ENCODE measurements at regions of chr2 and their contacts with region 1.

Region 1: GRCh38 chr2:230614913-230615332 is 97.7 kb upstream of the CAB39 start:
- DNase-seq: no peak
- ATAC-seq: no peak
- H3K4me3 ChIP-seq: no peak overlapping the region
- H3K27ac ChIP-seq: no peak overlapping the region
- H3K4me1 ChIP-seq: peaks cover 27 to 47% of the 10 kb centered on the region in 2 experiments
- H3K27me3 ChIP-seq: no peaks in the 10 kb centered on the region
- CTCF ChIP-seq: no peak
- POLR2A ChIP-seq: no peak
- RAD21 ChIP-seq: no peak

Region 2: DNA sequence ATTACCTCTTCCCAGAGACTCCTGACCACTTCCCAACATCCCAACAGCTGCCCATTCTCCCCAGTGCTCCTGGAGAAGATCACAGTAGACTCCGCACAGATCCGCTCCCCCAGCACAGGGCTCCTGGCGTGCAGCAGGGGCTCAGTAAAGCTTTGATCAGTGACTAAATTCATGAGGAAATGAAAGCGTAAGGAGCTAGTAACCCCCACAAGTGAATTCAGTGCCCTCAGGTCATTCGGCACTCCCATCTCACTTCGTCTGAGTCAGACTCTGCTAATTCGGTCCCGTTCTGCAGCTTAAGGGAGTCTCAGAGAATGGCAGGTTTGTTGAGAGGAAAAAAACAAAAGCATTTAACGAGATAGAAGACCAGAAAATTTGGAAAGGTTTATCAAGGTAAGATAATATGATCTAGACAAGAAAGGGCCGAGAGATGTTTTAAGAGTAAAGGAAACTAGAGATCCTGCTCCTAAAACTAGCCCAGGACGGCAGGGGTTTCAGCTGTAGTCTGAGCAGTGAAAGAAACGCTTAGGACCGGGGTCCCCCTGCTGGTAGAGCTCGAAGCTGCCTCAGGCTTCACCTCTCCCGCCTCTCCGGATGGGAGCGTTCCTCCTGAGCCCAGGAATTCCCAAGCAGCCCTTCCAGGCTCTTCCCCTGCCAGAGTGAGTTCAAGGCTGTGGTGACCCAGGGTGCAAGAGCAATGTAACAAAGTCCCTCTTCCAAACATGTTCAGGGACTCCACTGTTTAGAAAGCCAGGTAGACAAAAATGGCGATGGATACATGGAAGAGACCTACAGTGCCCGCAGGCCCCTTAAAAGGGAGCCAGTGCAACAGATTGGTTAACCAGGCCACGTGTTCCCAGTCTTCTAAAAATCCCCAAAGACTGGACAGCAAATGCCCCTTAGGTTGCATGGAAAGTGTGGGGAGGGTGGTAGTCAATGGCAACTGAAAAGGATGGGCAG is 1027.9 kb before region 1 on chr2:
- CTCF ChIA-PET with region 1: no interaction called
- POLR2A ChIA-PET with region 1: no interaction called
- RAD21 ChIA-PET with region 1: no interaction called
- intact Hi-C with region 1: loop called (anchors 5 kb)
- DNase-seq: peak; percentile 76
- ATAC-seq: peak; percentile 93
- H3K4me3 ChIP-seq: peak overlapping the region; percentile 38 to 53
- H3K27ac ChIP-seq: no peak overlapping the region
- H3K4me1 ChIP-seq: peaks cover 4 to 21% of the 10 kb centered on the region in 2 experiments; a peak in 3 of 4 replicates
- H3K27me3 ChIP-seq: no peaks in the 10 kb centered on the region
- CTCF ChIP-seq: peak; percentile 84 to 91 (median 84)
- POLR2A ChIP-seq: no peak
- RAD21 ChIP-seq: peak; percentile 96

Region 3: GRCh38 chr2:229921892-229922445 is 693.0 kb before region 1 on chr2 and contains the start of gene TRIP12:
- CTCF ChIA-PET with region 1: no interaction called
- POLR2A ChIA-PET with region 1: no interaction called
- RAD21 ChIA-PET with region 1: no interaction called
- intact Hi-C with region 1: loop called (anchors 5 kb)
- DNase-seq: peak; percentile 89
- ATAC-seq: peak; percentile 79
- H3K4me3 ChIP-seq: peak within 1 kb of the TSS; percentile 77 to 94
- H3K27ac ChIP-seq: peak within 1 kb of the TSS; percentile 77
- H3K4me1 ChIP-seq: peaks cover 14 to 17% of the 10 kb centered on the region in 2 experiments; a peak in 3 of 4 replicates
- H3K27me3 ChIP-seq: no peaks in the 10 kb centered on the region
- CTCF ChIP-seq: no peak
- POLR2A ChIP-seq: no peak
- RAD21 ChIP-seq: no peak
- total RNA-seq, gene TRIP12: 175 TPM

Region 4: GRCh38 chr2:230068016-230068650 is 546.8 kb before region 1 on chr2:
- CTCF ChIA-PET with region 1: interaction called, 7 read pairs
- POLR2A ChIA-PET with region 1: no interaction called
- RAD21 ChIA-PET with region 1: no interaction called
- intact Hi-C with region 1: loop called (anchors 2 kb)
- DNase-seq: no peak
- ATAC-seq: peak; percentile 64
- H3K4me3 ChIP-seq: peak overlapping the region; percentile 74 to 82
- H3K27ac ChIP-seq: peak overlapping the region; percentile 76
- H3K4me1 ChIP-seq: peaks cover 0 to 18% of the 10 kb centered on the region in 2 experiments; a peak in 3 of 4 replicates
- H3K27me3 ChIP-seq: no peaks in the 10 kb centered on the region
- CTCF ChIP-seq: peak in 1 of 3 experiments; percentile 23; a peak in 1 of 6 replicates
- POLR2A ChIP-seq: no peak
- RAD21 ChIP-seq: no peak

Region 5: DNA sequence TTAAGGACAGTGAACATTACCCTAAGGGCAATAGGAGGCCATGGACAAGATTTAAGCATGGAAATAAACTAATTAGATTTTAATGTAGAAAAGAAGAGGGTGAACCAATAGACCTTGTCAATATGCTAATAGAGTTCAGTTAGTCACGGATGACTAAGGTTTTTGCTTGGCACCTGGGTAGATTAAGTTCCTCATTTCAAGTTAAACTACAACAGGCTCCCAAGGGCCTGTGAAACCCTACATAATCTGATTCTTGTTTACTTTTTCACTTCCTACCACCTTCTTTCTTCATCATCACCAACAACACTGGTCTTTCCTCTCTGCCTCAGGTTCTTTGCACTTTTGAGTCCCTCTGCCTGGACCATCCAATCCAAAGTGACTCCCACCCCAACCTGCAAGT is 409.9 kb before region 1 on chr2:
- CTCF ChIA-PET with region 1: no interaction called
- POLR2A ChIA-PET with region 1: no interaction called
- RAD21 ChIA-PET with region 1: no interaction called
- intact Hi-C with region 1: no loop called
- DNase-seq: no peak
- ATAC-seq: no peak
- H3K4me3 ChIP-seq: no peak overlapping the region
- H3K27ac ChIP-seq: no peak overlapping the region
- H3K4me1 ChIP-seq: no peaks in the 10 kb centered on the region
- H3K27me3 ChIP-seq: no peaks in the 10 kb centered on the region
- CTCF ChIP-seq: no peak
- POLR2A ChIP-seq: no peak
- RAD21 ChIP-seq: no peak

Region 6: GRCh38 chr2:230323385-230324106 is 291.4 kb before region 1 on chr2:
- CTCF ChIA-PET with region 1: interaction called, 5 read pairs
- POLR2A ChIA-PET with region 1: no interaction called
- RAD21 ChIA-PET with region 1: no interaction called
- intact Hi-C with region 1: loop called (anchors 1 kb)
- DNase-seq: peak; percentile 22
- ATAC-seq: peak; percentile 82
- H3K4me3 ChIP-seq: no peak overlapping the region
- H3K27ac ChIP-seq: no peak overlapping the region; the same call in 1 of the 2 replicates
- H3K4me1 ChIP-seq: peaks cover 3 to 37% of the 10 kb centered on the region in 2 experiments; a peak in 3 of 4 replicates
- H3K27me3 ChIP-seq: no peaks in the 10 kb centered on the region
- CTCF ChIP-seq: peak; percentile 40 to 92 (median 80); a peak in 4 of 6 replicates
- POLR2A ChIP-seq: no peak
- RAD21 ChIP-seq: peak; percentile 53

Region 7: GRCh38 chr2:230636684-230637271 is 21.9 kb after region 1 on chr2:
- CTCF ChIA-PET with region 1: no interaction called
- POLR2A ChIA-PET with region 1: no interaction called
- RAD21 ChIA-PET with region 1: no interaction called
- intact Hi-C with region 1: no loop called
- DNase-seq: no peak
- ATAC-seq: no peak
- H3K4me3 ChIP-seq: no peak overlapping the region
- H3K27ac ChIP-seq: no peak overlapping the region
- H3K4me1 ChIP-seq: no peaks in the 10 kb centered on the region
- H3K27me3 ChIP-seq: no peaks in the 10 kb centered on the region
- CTCF ChIP-seq: no peak
- POLR2A ChIP-seq: no peak
- RAD21 ChIP-seq: no peak

Region 8: DNA sequence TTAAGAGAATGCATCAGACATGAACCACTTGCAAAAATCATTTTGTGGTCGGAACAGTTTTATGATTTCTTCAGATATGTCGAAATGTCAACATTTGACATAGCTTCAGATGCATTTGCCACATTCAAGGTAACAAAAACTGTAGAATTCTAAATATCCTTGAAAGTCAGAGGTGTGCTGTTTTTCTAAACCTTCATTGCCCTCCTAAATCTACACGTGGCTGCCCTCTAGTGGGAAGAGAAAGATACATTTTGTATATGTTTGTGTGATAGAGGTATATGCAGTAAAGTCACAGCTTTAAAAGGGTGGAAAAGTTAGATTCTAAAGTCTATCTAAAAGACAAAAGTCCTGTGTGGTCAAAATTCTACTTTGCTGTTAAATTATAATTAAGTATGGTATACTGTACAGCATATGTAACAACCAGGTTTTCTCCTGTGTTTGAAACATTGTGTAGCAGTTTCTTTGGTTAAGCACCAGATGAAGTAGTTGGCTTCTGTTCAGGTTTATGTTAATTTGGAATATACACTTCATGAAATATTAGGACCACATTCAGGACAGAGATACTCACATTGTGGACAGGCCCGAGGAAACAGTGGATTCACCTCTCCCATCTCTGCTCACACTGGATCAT is 184.0 kb after region 1 on chr2:
- CTCF ChIA-PET with region 1: interaction called, 10 read pairs
- POLR2A ChIA-PET with region 1: no interaction called
- RAD21 ChIA-PET with region 1: interaction called, 4 read pairs
- intact Hi-C with region 1: loop called (anchors 2 kb)
- DNase-seq: no peak
- ATAC-seq: 0 out of 2 replicates have a peak, but pooled peaks have one; percentile 33
- H3K4me3 ChIP-seq: no peak overlapping the region
- H3K27ac ChIP-seq: no peak overlapping the region
- H3K4me1 ChIP-seq: peaks cover 32 to 48% of the 10 kb centered on the region in 2 experiments
- H3K27me3 ChIP-seq: no peaks in the 10 kb centered on the region
- CTCF ChIP-seq: peak; percentile 61 to 83 (median 61)
- POLR2A ChIP-seq: no peak
- RAD21 ChIP-seq: peak; percentile 92

Region 9: GRCh38 chr2:230942920-230943896 is 328.3 kb after region 1 on chr2:
- CTCF ChIA-PET with region 1: no interaction called
- POLR2A ChIA-PET with region 1: no interaction called
- RAD21 ChIA-PET with region 1: no interaction called
- intact Hi-C with region 1: no loop called
- DNase-seq: no peak
- ATAC-seq: peak; percentile 63
- H3K4me3 ChIP-seq: no peak overlapping the region
- H3K27ac ChIP-seq: no peak overlapping the region
- H3K4me1 ChIP-seq: no peaks in the 10 kb centered on the region
- H3K27me3 ChIP-seq: no peaks in the 10 kb centered on the region
- CTCF ChIP-seq: no peak
- POLR2A ChIP-seq: no peak
- RAD21 ChIP-seq: no peak